Posterior vena cava (tissue), 2 donors: ENCODE measurements at regions of chr7 and their contacts with region 1.

Region 1: DNA sequence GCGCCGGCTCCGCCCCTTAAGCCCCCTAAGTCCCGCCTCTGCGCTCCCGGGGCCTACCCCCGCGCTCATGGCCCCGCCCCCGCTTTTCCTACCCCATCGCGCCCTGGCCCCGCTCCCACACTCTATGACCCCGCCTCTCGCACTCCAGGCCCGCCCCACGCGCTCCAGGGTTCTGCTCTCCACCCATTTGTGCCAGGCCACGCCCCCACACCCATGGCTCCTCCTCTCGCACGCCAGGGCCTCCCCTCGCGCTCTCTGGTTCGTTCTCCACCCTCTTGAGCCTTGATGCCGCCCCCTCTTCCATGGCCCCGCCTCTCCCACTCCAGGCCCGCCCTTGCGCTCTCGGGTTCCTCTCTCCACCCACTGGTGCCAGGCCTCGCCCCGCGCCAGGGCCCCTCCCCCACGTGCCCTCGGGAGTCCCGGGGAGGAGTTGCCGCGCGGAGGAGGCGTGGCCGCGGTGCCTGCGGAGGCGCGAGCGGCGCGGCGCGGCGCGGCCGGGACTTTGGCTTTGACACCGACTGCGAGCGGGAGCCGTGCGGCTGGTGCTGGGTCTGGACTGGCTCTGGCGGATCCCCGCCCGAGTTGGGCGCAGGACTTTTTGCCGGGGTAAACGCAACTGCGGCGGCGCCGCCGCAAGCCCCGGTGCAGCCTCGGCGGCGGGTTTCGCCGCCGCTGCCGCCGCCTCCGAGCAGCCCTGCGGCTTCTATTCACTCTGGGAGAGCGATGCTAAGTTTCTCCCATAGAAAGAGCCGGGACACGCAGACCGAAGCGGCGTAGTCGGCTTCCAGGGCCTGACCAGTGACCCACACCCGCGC is at the start of gene EEPD1:
- DNase-seq: peak; percentile 100
- total RNA-seq, gene EEPD1: 9.7 to 10.4 TPM

Region 2: DNA sequence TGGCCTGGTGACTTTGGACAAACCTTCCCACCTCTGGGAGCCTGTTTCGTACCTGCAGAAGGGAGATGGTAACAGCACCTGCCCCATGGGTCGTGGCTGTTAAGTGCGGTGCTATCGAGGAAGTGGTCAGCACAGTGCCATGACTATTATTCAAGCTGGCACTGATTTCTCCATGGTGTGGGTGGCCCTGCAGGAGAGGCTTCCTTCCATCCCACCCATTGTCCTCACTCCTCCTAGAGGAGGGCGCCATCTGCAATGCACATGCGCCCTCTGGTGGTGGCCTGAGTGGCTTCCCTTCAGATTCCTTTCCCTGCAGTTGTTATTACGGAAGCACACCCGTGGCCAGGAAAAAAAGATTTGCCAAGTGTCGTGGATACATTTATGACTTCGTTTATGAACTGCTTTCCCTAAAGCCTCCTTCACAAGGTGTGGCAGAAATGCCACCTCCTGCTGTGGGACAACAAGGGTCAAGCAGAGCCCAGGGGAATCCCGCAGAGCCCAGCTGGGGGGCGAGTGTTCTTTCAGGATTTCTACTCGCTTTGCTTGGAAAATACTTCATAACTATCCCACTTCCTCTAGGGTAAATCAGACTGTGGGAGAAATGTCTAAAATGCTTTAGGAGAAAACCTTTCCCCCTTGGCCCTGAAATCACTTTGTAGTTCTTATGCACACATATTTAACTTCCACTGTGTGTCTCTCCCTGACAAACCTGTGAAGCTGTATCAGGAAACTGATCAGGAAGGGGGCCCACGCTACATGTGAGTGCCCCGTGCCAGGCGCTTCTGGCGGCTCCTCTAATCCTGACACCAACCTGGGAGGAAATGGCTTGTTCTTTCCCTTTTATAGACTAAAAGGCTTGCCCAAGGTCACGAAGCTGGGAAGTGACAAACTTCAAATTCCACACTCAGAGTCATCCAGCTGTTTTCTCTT is 138.7 kb after region 1 on chr7:
- intact Hi-C with region 1: loop called in 1 of 2 experiments (anchors 5 kb)
- DNase-seq: peak; percentile 95

Region 3: DNA sequence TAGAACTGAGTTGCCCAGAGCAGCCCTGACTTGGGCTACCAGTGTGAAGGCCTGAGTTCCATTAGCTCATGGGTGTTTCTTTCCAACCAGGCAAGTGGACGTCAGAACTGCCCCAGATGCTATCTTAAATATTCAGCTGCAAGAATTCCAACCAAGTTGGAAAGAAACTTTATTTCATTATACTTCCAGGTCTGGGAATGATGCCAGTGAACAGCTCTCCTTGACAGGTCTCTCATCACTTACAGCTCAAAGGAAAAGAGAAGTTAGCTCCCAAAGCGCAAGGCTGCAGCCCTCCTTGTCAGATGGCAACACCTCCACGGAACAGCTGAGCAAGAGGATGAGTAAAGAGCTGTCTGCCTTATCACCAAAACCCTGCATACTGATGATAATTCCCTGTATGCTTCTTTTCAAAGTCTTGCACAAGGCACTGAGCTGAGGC is 826.9 kb after region 1 on chr7:
- intact Hi-C with region 1: loop called in 1 of 2 experiments (anchors 5 kb)
- DNase-seq: no peak